GM13977 (cell line): ENCODE measurements at regions of chr3 and their contacts with region 1.

Region 1: DNA sequence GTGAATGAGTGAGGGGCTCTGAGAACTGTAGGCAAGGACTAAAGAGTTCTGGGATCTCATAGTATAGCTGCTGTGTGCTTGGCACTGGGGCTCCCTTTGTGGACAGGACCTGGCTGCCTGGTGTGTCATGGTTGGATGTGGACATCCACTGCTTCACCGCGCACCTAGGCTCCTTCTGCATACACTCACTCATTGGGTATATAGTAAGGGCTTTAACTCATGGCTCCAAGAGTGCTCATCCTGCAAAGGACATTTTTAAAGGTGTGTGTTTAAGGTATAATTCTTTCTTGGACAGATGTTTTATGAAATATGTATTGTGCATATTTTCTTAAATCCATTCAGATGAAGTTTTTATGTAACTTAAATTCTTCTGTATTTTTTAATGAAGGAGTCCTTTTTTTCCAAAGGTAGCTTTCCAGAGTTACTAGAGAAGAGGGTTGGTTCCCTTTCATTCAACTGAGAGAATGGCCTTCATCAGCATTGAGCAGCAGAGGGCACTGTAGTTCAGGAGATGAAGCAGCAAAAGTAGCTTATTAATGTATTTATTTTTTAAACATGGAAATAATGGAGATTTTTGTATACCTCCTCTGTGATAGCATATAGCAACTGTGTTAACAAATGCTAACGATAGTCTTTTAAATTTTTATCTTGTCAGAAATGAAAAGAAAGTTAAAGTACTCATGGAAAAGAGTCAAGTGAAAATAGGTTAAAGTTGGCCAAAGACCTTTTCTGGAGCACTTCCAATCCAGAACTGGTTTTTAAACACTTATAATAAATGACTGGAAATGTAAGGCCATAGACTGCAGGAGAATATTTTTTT is 25.2 kb downstream of the OXNAD1 start:
- DNase-seq: peak; percentile 26
- CTCF ChIP-seq: peak; percentile 87

Region 2: DNA sequence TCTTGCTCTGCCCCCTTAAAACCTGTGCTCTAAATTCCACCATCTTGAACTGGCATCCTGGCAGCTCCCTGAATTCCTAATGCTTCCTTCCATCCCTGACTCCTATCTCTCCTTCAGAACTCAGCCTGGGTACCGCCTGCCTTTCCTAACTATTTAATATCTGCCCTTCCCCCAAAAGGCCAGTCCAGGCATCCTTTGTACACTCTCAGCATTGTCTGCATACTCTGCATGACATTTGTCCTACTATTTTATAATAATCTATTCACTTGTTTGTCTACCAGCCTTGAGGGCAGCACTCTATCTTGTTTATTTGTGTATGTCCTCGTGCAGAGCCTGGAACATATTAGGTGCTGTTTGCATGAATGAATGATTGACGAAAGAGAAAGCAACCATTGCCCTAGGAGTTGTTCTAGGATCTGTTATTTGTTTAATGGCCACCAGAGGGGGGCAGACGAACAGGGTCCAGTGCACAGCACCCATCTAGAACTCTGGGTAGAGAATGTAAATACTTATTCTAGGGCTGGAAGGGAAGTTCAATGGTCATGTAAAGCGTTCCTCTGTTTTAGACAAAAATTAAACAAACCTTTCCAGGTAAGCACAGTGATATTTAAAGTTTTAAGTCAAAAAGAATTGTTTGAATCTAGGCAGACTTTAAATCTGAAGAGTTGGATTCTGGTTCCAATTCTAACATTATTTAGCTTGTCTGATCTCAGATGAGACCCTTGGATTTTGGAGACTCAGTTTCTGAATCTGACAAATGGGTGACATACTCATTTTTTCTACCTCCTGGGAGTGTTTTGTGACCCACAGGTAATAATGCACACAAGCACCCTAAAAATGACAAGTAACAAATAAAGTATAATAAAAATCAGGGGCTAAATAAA is 241.5 kb before region 1 on chr3:
- in situ Hi-C with region 1: no loop called
- DNase-seq: peak; percentile 80
- CTCF ChIP-seq: peak; percentile 70

Region 3: DNA sequence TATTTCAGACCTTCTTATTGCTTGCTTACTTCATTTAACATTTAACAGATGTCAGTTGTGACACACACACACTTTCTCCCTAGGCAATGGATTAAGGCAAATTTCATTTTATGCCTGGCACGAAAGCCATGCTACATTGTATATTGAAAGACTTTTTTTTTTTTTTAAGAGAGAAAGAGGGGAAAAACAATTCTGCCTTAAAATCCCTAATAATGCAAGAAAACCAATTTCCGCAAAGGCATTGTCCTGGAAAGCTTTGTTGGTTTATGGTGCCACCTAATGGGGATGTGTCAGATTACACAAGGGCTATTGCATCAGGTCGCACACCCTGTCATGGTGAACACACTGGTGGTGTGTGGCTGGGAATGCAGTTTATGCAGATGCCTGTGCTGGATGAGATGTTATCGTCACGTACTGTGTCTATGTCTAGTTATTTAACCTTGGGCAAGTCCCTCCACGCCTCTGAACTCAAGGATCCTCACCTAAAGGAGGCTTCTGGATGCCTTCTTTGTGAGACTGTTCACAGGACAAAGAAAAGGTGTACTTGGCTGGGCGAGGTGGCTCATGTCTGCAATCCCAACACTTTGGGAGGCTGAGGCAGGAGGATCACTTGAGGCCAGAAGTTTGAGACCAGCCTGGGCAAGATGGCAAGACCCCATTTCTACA is 260.6 kb after region 1 on chr3:
- in situ Hi-C with region 1: loop called (anchors 5 kb)
- DNase-seq: peak; percentile 60
- CTCF ChIP-seq: peak; percentile 80

Region 4: GRCh38 chr3:16849229-16849628 is 559.0 kb after region 1 on chr3:
- in situ Hi-C with region 1: loop called (anchors 25 kb)
- DNase-seq: peak; percentile 27
- CTCF ChIP-seq: no peak

Region 5: GRCh38 chr3:17213102-17213501 is 922.9 kb after region 1 on chr3:
- in situ Hi-C with region 1: loop called (anchors 25 kb)
- DNase-seq: no peak
- CTCF ChIP-seq: no peak